Activated CD4-positive, alpha-beta memory T cell treated with anti-CD3 and anti-CD28 coated beads, Interleukin-2, amount 10 ng/mL, durations not matched to agents 7 days and 5 days (primary cell): ENCODE measurements at regions of chr6 and their contacts with region 1.

Region 1: DNA sequence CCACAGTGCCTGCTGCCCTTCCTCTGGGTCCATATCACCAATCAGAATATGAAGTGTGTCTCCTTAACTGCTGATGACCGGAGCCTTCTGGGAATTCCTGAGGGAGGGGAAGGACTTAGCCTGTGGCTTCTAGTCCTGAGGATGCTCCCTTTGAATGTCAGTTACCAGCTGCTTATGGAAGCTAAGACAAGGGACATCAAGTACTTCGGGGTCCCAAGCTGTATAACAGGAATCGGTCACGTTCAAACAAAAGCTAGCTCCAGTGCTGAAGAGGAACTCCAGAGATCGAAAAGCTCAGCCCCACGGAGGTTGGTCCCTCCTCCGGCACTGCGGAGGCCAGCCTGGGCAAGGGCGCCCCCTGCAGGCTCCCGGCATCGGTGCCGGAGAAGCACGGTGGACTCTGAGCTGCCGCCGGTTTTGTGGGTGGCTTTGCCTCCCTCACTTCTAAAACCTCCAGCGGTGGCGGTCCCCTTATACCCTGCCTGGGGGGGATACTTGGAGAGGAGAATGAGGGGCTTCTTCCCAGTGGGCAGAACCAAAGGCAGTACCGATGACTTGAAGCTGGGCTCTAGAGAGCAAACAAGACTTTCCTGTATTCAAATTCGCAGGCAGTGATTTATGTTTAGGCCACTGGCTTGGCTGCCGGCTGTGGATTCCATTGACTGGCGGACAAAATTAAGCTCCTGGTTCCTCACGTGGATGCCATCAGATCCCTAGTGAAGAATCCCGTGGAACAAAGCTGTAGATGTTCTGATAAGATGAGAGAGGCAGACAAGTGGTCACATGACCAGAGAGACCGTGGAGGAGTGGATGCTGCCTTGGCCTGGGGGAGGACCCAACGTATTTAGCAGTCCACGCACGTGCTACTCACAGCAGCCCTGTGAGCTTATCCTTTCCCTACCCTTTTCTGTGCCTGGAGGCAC is 16.2 kb upstream of the UBR2 start:
- DNase-seq: peak; percentile 88
- H3K4me3 Mint-ChIP-seq: peak overlapping the region; percentile 54
- H3K27ac Mint-ChIP-seq: peak overlapping the region; percentile 33
- H3K4me1 Mint-ChIP-seq: peaks cover 20% of the 10 kb centered on the region
- H3K27me3 Mint-ChIP-seq: peaks cover 4% of the 10 kb centered on the region

Region 2: DNA sequence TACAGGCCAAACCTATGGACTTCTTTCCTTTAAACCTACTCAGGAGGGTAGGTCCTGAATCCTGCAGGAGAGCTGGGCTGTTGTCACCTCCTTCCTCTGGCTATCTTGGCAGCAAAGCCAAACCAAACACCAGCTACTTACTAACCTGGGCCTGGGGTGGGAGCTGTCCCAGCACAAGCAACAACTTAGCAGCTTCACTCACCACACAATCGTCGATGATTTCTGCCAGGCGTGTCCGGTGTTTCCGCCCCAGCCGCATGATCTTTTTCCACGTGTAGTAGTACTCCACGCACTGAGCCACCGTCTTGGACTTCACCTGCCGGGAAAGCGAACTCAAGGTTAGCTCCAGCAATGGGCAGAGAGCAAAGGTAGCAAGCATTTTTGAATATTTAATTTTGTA is 304.6 kb before region 1 on chr6:
- CTCF ChIA-PET with region 1: interaction called, 11 read pairs
- POLR2A ChIA-PET with region 1: no interaction called
- DNase-seq: no peak
- H3K4me3 Mint-ChIP-seq: no peak overlapping the region
- H3K27ac Mint-ChIP-seq: no peak overlapping the region
- H3K4me1 Mint-ChIP-seq: no peaks in the 10 kb centered on the region
- H3K27me3 Mint-ChIP-seq: no peaks in the 10 kb centered on the region

Region 3: DNA sequence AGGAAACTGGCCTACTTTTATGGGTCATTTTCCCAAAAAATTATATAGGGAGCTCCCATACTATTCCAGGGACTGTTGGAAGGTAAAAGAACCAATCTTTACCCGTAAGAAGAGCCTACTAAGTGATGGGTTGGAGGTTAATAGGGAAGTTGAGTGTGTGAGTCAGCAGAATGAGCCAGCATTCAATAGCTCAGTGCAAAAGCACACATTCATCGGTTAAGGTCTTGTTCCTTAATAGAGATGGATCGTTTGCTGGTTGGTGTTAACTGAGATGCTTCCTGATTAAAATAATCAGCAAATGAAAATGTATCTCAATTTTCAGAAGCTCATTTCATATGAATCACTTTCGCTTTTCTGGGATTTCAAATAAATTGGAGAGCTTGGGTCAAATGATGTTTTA is 214.8 kb before region 1 on chr6:
- CTCF ChIA-PET with region 1: interaction called, 26 read pairs
- POLR2A ChIA-PET with region 1: no interaction called
- DNase-seq: no peak
- H3K4me3 Mint-ChIP-seq: no peak overlapping the region
- H3K27ac Mint-ChIP-seq: no peak overlapping the region
- H3K4me1 Mint-ChIP-seq: peaks cover 22% of the 10 kb centered on the region
- H3K27me3 Mint-ChIP-seq: no peaks in the 10 kb centered on the region

Region 4: DNA sequence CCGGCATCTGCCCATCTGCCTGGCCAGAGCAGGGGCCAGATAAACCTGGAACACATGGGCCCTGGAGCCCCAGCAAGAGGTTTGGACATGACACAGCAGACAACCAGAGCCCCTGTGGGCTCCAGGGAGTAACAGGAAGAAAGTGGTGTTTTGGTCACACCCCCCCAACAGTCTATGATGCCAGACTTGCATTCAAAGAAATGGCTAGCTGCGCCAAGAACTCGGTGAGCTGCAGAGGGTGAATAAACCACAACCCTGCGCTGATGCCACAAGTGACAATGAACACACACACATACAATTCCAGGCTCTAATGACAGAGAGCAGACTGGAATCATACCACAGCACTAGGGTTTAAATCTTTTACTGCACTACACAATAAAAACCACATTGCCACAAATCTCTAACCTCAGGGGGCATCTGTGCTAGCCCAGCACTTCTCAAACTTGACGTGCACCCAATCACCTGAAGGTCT is 130.0 kb before region 1 on chr6:
- CTCF ChIA-PET with region 1: interaction called, 13 read pairs
- POLR2A ChIA-PET with region 1: no interaction called
- DNase-seq: peak; percentile 80
- H3K4me3 Mint-ChIP-seq: no peak overlapping the region
- H3K27ac Mint-ChIP-seq: peak overlapping the region; percentile 54
- H3K4me1 Mint-ChIP-seq: peaks cover 54% of the 10 kb centered on the region
- H3K27me3 Mint-ChIP-seq: peaks cover 2% of the 10 kb centered on the region

Region 5: GRCh38 chr6:42505377-42505702 is 42.3 kb before region 1 on chr6:
- CTCF ChIA-PET with region 1: interaction called, 18 read pairs
- POLR2A ChIA-PET with region 1: no interaction called
- DNase-seq: no peak
- H3K4me3 Mint-ChIP-seq: no peak overlapping the region
- H3K27ac Mint-ChIP-seq: no peak overlapping the region
- H3K4me1 Mint-ChIP-seq: peaks cover 5% of the 10 kb centered on the region
- H3K27me3 Mint-ChIP-seq: peaks cover 3% of the 10 kb centered on the region

Region 6: GRCh38 chr6:42563697-42564505 is 16.2 kb after region 1 on chr6 and contains the start of gene UBR2:
- CTCF ChIA-PET with region 1: interaction called, 83 read pairs
- POLR2A ChIA-PET with region 1: interaction called, 15 read pairs
- DNase-seq: peak; percentile 95
- H3K4me3 Mint-ChIP-seq: peak within 1 kb of the TSS; percentile 92
- H3K27ac Mint-ChIP-seq: peak within 1 kb of the TSS; percentile 83
- H3K4me1 Mint-ChIP-seq: peaks cover 33% of the 10 kb centered on the region
- H3K27me3 Mint-ChIP-seq: no peaks in the 10 kb centered on the region
- total RNA-seq, gene UBR2: 34.0 to 36.2 TPM

Region 7: GRCh38 chr6:42704241-42704936 is 156.7 kb after region 1 on chr6:
- CTCF ChIA-PET with region 1: no interaction called
- POLR2A ChIA-PET with region 1: no interaction called
- DNase-seq: no peak
- H3K4me3 Mint-ChIP-seq: no peak overlapping the region
- H3K27ac Mint-ChIP-seq: no peak overlapping the region
- H3K4me1 Mint-ChIP-seq: peaks cover 6% of the 10 kb centered on the region
- H3K27me3 Mint-ChIP-seq: no peaks in the 10 kb centered on the region